RWPE1 (cell line): ENCODE measurements at regions of chr5 and their contacts with region 1.

Region 1: GRCh38 chr5:96807075-96807654 is 580 bp downstream of the ERAP1 start:
- DNase-seq: peak; percentile 84
- H3K27ac ChIP-seq: peak overlapping the region; percentile 96
- CTCF ChIP-seq: no peak

Region 2: DNA sequence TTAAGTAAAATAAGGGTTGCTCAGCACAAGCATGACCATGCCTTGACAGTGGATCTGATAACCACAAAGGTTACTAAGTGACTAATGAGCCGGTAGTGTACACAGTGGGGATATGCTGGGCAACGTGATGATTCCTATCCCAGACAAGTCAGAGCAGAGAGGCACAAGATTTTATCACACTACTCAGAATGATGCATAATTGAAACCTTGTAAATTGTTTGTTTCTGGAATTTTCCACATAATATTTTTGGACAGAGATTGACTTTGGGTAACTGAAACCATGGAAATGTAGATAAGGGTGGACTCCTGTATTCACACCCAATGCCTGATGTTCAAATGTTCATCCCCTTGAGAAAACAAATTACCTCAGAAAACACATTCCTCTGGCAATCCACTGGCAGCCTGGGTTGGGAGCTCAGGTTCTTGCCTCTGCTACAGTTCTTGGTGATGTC is 16.8 kb after region 1 on chr5:
- CTCF ChIA-PET with region 1: interaction called, 5 read pairs
- POLR2A ChIA-PET with region 1: interaction called, 10 read pairs
- DNase-seq: peak; percentile 92
- H3K27ac ChIP-seq: peak overlapping the region; percentile 69; the same call in 1 of the 2 replicates
- CTCF ChIP-seq: no peak